ENCODE measurements at regions of chr16 and their contacts with region 1.

Region 1: DNA sequence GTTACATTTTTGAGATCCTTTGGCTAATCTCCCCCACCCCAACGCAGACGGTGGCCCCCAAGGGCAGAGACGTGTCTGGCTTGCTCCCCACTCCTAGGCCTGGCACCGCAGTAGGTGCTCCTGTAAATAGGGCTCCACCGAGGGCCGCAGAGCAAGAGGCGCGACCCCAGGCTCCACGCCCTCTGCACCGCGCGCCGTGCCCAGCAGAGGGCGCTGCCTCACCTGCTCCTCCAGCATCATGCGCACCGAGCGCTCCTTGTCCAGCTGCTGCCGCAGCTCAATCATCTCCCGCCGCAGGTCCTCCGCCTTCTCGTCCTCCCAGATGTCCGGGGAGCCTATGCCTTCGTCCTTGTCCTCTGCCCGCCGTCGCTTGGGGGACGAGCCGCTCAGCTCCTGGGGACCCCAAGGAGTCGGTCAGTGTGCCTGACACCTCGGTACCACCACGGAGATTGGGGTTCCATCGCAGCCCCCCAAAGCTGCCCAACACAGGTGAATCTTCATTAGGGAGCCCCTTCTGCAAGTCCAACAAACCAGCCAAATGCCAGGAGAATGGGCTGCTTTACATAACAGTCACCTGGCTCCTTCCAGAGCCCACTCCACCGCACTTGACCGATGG is 11.2 kb downstream of the TFAP4 start:
- DNase-seq: peak; percentile 90
- ATAC-seq: peak; percentile 64
- H3K4me3 Mint-ChIP-seq: no peak overlapping the region
- H3K27ac Mint-ChIP-seq: peak overlapping the region; percentile 93
- H3K4me1 Mint-ChIP-seq: peaks cover 29% of the 10 kb centered on the region
- H3K27me3 Mint-ChIP-seq: no peaks in the 10 kb centered on the region
- CTCF ChIP-seq: peak; percentile 99

Region 2: DNA sequence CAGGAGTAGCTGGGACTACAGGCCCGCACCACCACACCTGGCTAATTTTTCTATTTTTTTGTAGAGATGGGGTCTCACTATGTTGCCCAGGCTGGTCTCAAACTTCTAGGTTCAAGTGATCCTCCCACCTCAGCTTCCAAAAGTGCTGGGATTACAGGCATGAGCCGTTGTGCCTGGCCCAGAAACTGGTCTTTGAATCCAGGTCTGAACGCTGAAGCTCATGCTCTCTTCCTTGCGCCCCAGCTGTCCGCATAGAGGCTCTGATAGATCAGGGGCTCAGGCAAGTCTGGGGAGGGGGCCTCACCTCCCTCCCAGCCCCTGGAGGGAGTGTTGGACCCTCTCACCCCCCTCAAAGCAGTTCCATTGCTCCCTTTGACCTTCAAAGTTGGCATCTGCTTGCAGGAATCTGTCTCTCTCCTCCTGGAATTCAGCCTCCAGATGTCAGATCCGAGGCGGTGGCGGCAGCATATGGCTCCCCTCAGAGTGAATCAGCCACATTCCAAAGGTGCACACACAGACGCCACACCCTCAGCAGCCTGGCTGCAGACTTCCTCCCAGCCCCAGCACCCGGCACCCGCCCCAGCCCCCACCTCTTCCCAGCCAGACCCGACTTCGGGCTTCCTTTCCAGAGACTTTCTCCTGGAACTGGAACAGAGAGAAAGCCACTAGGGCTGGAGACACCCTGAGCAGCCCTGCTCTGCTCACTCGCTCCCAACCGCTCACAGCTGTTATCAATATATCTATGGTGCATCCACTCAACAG is 37.3 kb after region 1 on chr16:
- CTCF ChIA-PET with region 1: interaction called, 10 read pairs
- POLR2A ChIA-PET with region 1: interaction called, 3 read pairs
- DNase-seq: peak; percentile 76
- ATAC-seq: peak; percentile 87
- H3K4me3 Mint-ChIP-seq: no peak overlapping the region
- H3K27ac Mint-ChIP-seq: peak overlapping the region; percentile 98
- H3K4me1 Mint-ChIP-seq: peaks cover 27% of the 10 kb centered on the region
- H3K27me3 Mint-ChIP-seq: no peaks in the 10 kb centered on the region
- CTCF ChIP-seq: no peak

Region 3: GRCh38 chr16:4307215-4308037 is 45.8 kb after region 1 on chr16:
- CTCF ChIA-PET with region 1: interaction called, 11 read pairs
- POLR2A ChIA-PET with region 1: interaction called, 3 read pairs
- DNase-seq: peak; percentile 94
- ATAC-seq: peak; percentile 78
- H3K4me3 Mint-ChIP-seq: peak overlapping the region; percentile 96
- H3K27ac Mint-ChIP-seq: peak overlapping the region; percentile 97
- H3K4me1 Mint-ChIP-seq: peaks cover 39% of the 10 kb centered on the region
- H3K27me3 Mint-ChIP-seq: no peaks in the 10 kb centered on the region; the same call in 1 of the 2 replicates
- CTCF ChIP-seq: no peak

Region 4: DNA sequence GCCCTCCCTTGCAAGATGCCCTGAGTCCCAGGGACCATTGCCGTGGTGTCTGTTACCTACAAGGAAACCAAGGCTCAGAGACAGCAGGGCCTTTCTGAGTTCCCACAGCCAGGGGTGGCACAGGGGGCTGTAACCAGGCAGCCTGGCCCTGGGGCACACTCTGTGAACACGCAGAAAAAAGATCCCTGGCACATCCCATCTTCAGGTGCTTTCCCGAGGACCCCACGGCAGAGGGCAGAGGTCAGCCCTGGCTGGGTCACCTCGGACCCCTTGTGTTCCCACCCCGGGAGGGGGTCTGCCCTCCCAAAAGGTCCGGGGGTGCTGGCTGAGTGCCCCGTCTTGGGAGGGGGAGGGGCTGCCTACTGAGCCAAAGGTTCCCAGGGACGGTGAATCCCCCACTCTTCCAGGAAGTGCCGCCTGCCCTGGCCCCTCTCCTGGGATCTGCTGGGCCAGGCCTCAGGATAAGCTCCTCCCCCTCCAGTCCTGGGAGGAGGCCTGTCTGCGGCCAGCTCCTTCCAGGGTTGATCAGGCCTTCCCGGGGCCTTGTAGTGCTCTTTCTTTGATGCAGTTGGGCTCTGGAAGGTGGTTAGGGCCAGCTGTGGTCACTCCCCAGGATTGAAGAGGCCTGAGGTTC is 62.3 kb after region 1 on chr16:
- CTCF ChIA-PET with region 1: interaction called, 27 read pairs
- POLR2A ChIA-PET with region 1: no interaction called
- DNase-seq: peak; percentile 68
- ATAC-seq: peak; percentile 75
- H3K4me3 Mint-ChIP-seq: no peak overlapping the region
- H3K27ac Mint-ChIP-seq: peak overlapping the region; percentile 93
- H3K4me1 Mint-ChIP-seq: peaks cover 29% of the 10 kb centered on the region
- H3K27me3 Mint-ChIP-seq: no peaks in the 10 kb centered on the region
- CTCF ChIP-seq: no peak

Region 5: DNA sequence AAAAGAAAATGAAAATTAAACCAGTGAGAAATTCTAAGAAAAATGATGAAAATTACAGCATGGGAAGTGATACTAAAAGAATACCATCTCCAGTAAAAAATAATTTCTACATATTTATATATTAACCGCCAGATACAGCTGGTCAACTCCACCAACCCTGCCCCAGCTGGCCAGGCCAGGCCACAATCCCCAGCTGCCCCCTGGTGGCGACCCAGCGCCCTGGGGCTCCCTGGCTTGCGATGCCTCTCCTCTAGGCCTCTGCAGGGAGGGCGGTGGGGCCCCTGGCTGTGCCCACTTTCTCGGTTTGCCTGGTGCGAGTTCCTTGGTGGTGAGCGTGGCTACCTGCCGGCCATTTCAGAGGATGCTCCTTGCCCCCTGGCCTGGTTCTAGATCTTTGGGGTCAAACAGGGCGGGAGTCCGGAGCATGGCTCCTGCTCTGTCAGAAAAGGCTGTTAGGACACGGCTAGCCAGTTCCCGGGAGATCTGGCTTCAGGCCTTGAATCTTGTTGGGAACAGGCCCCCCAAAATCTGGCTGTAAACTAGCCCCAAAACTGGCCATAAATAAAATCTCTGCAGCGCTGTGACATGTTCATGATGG is 68.7 kb after region 1 on chr16:
- CTCF ChIA-PET with region 1: interaction called, 27 read pairs
- POLR2A ChIA-PET with region 1: no interaction called
- DNase-seq: peak; percentile 86
- ATAC-seq: peak; percentile 27
- H3K4me3 Mint-ChIP-seq: no peak overlapping the region
- H3K27ac Mint-ChIP-seq: no peak overlapping the region
- H3K4me1 Mint-ChIP-seq: peaks cover 18% of the 10 kb centered on the region
- H3K27me3 Mint-ChIP-seq: no peaks in the 10 kb centered on the region
- CTCF ChIP-seq: peak; percentile 93

Region 6: GRCh38 chr16:4392382-4393239 is 130.9 kb after region 1 on chr16:
- CTCF ChIA-PET with region 1: interaction called, 10 read pairs
- POLR2A ChIA-PET with region 1: no interaction called
- DNase-seq: peak; percentile 81
- ATAC-seq: peak; percentile 76
- H3K4me3 Mint-ChIP-seq: peak overlapping the region; percentile 20; the same call in 1 of the 2 replicates
- H3K27ac Mint-ChIP-seq: peak overlapping the region; percentile 92
- H3K4me1 Mint-ChIP-seq: peaks cover 48% of the 10 kb centered on the region
- H3K27me3 Mint-ChIP-seq: no peaks in the 10 kb centered on the region
- CTCF ChIP-seq: no peak

Measured in WTC11 (cell line).